H1 (cell line): ENCODE measurements at regions of chr9 and their contacts with region 1.

Region 1: GRCh38 chr9:100700689-100701318 is 122.9 kb downstream of the CAVIN4 start:
- DNase-seq: peak in 1 of 2 experiments; percentile 61
- H3K4me3 ChIP-seq: no peak overlapping the region
- H3K27ac ChIP-seq: no peak overlapping the region
- H3K4me1 ChIP-seq: peaks cover 0 to 6% (median 5%) of the 10 kb centered on the region in 4 experiments; a peak in 4 of 7 replicates
- H3K27me3 ChIP-seq: no peaks in the 10 kb centered on the region
- CTCF ChIP-seq: peak; percentile 33 to 71 (median 70)
- EP300 ChIP-seq: no peak
- POLR2A ChIP-seq: no peak
- RAD21 ChIP-seq: peak; percentile 82 to 84

Region 2: GRCh38 chr9:100637787-100638186 is 63.0 kb before region 1 on chr9:
- CTCF ChIA-PET with region 1: interaction called, 16 read pairs
- POLR2A ChIA-PET with region 1: no interaction called
- DNase-seq: peak; percentile 50 to 67
- H3K4me3 ChIP-seq: peak overlapping the region in 1 of 4 experiments; percentile 22; a peak in 1 of 8 replicates
- H3K27ac ChIP-seq: peak overlapping the region; percentile 58; the same call in 1 of the 2 replicates
- H3K4me1 ChIP-seq: peaks cover 3 to 18% (median 8%) of the 10 kb centered on the region in 4 experiments
- H3K27me3 ChIP-seq: no peaks in the 10 kb centered on the region
- CTCF ChIP-seq: peak; percentile 15 to 58 (median 17); a peak in 3 of 4 replicates
- EP300 ChIP-seq: no peak
- POLR2A ChIP-seq: no peak
- RAD21 ChIP-seq: peak; percentile 18 to 33; a peak in 3 of 4 replicates

Region 3: GRCh38 chr9:100730086-100730485 is 29.3 kb after region 1 on chr9:
- CTCF ChIA-PET with region 1: interaction called, 11 read pairs
- POLR2A ChIA-PET with region 1: no interaction called
- DNase-seq: no peak
- H3K4me3 ChIP-seq: no peak overlapping the region
- H3K27ac ChIP-seq: no peak overlapping the region
- H3K4me1 ChIP-seq: peaks cover 0 to 2% (median 0%) of the 10 kb centered on the region in 4 experiments; a peak in 1 of 7 replicates
- H3K27me3 ChIP-seq: no peaks in the 10 kb centered on the region
- CTCF ChIP-seq: no peak
- EP300 ChIP-seq: no peak
- POLR2A ChIP-seq: no peak
- RAD21 ChIP-seq: no peak

Region 4: GRCh38 chr9:101235105-101235866 is 534.5 kb after region 1 on chr9:
- CTCF ChIA-PET with region 1: interaction called, 26 read pairs
- POLR2A ChIA-PET with region 1: no interaction called
- DNase-seq: no peak
- H3K4me3 ChIP-seq: no peak overlapping the region
- H3K27ac ChIP-seq: no peak overlapping the region
- H3K4me1 ChIP-seq: peaks cover 0 to 20% (median 2%) of the 10 kb centered on the region in 4 experiments; a peak in 4 of 7 replicates
- H3K27me3 ChIP-seq: no peaks in the 10 kb centered on the region
- CTCF ChIP-seq: peak in 2 of 3 experiments; percentile 55 to 58; a peak in 2 of 4 replicates
- EP300 ChIP-seq: no peak
- POLR2A ChIP-seq: no peak
- RAD21 ChIP-seq: peak; percentile 89 to 92